ENCODE measurements at regions of chr2 and their contacts with region 1.

Region 1: DNA sequence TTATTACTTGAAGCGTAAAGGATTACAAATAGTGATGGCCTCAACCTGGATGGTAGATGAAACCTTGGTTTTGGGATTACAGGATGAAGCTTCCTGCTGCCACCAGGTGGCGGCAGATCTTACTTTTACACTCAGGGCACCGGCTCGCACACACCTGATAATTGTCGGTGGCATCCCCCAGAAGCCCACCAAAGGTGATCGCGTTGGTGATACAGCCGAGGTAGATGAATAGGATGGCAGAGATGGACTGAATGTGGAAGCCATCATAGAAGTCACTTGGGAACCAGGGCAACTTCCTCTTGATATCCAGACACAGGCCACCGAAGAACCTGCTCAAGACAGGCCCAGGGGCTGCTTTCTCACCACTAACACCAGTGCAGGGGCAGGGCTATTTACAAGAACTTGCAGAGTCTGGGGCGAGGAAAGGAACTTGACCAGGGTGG is 51.8 kb downstream of the MTHFD2 start:
- DNase-seq: peak in 4 of 5 donors; percentile 53 to 59 (median 57)
- H3K4me3 ChIP-seq: no peak overlapping the region
- H3K4me3 Mint-ChIP-seq: peak overlapping the region in 1 of 8 donors; percentile 55
- H3K27ac ChIP-seq: no peak overlapping the region
- H3K27ac Mint-ChIP-seq: peak overlapping the region in 3 of 7 donors; percentile 55 to 84 (median 84)
- H3K4me1 ChIP-seq: peaks cover 4% of the 10 kb centered on the region
- H3K4me1 Mint-ChIP-seq: peaks cover 4 to 8% (median 6%) of the 10 kb centered on the region in 4 donors
- H3K27me3 ChIP-seq: no peaks in the 10 kb centered on the region
- H3K27me3 Mint-ChIP-seq: no peaks in the 10 kb centered on the region

Region 2: GRCh38 chr2:74080346-74080745 is 169.9 kb before region 1 on chr2:
- CTCF ChIA-PET with region 1: no interaction called
- POLR2A ChIA-PET with region 1: no interaction called
- intact Hi-C with region 1: no loop called
- DNase-seq: no peak
- H3K4me3 ChIP-seq: no peak overlapping the region
- H3K4me3 Mint-ChIP-seq: no peak overlapping the region
- H3K27ac ChIP-seq: no peak overlapping the region
- H3K27ac Mint-ChIP-seq: peak overlapping the region in 2 of 7 donors; percentile 14 to 36
- H3K4me1 ChIP-seq: no peaks in the 10 kb centered on the region
- H3K4me1 Mint-ChIP-seq: peaks cover 0 to 2% (median 0%) of the 10 kb centered on the region in 4 donors
- H3K27me3 ChIP-seq: no peaks in the 10 kb centered on the region
- H3K27me3 Mint-ChIP-seq: no peaks in the 10 kb centered on the region

Region 3: GRCh38 chr2:74206180-74206688 is 44.0 kb before region 1 on chr2:
- CTCF ChIA-PET with region 1: interaction called, 12 read pairs
- POLR2A ChIA-PET with region 1: no interaction called
- intact Hi-C with region 1: no loop called
- DNase-seq: peak; percentile 53 to 64 (median 55)
- H3K4me3 ChIP-seq: peak overlapping the region in 1 of 2 donors; percentile 23
- H3K4me3 Mint-ChIP-seq: peak overlapping the region; percentile 74 to 85 (median 80)
- H3K27ac ChIP-seq: peak overlapping the region; percentile 68
- H3K27ac Mint-ChIP-seq: peak overlapping the region; percentile 91 to 99 (median 96)
- H3K4me1 ChIP-seq: peaks cover 52% of the 10 kb centered on the region
- H3K4me1 Mint-ChIP-seq: peaks cover 27 to 56% (median 39%) of the 10 kb centered on the region in 4 donors
- H3K27me3 ChIP-seq: no peaks in the 10 kb centered on the region
- H3K27me3 Mint-ChIP-seq: no peaks in the 10 kb centered on the region

Region 4: DNA sequence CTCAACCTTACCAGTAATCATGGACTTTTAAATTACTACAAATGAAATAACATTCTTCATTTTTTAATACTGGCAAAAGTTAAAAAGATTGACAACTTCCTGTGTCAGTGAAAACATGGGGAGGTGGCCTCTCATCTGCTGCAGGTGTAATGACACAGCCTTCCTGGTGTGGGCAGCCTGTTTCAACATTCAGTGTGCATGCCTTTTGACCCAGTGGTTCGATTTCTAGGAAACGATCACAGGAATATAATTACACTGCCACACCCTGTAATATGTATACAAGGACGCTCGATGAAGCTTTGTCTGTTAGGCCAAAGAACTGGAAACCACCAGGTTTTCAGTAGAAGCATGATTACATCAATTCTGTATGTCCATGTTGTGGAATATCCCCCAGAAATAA is 16.9 kb after region 1 on chr2:
- CTCF ChIA-PET with region 1: interaction called, 16 read pairs
- POLR2A ChIA-PET with region 1: no interaction called
- intact Hi-C with region 1: no loop called
- DNase-seq: peak; percentile 66 to 73 (median 70)
- H3K4me3 ChIP-seq: no peak overlapping the region
- H3K4me3 Mint-ChIP-seq: peak overlapping the region; percentile 11 to 77 (median 65)
- H3K27ac ChIP-seq: no peak overlapping the region
- H3K27ac Mint-ChIP-seq: peak overlapping the region in 6 of 7 donors; percentile 14 to 81 (median 70)
- H3K4me1 ChIP-seq: peaks cover 20% of the 10 kb centered on the region
- H3K4me1 Mint-ChIP-seq: peaks cover 14 to 23% (median 18%) of the 10 kb centered on the region in 4 donors
- H3K27me3 ChIP-seq: no peaks in the 10 kb centered on the region
- H3K27me3 Mint-ChIP-seq: no peaks in the 10 kb centered on the region

Region 5: DNA sequence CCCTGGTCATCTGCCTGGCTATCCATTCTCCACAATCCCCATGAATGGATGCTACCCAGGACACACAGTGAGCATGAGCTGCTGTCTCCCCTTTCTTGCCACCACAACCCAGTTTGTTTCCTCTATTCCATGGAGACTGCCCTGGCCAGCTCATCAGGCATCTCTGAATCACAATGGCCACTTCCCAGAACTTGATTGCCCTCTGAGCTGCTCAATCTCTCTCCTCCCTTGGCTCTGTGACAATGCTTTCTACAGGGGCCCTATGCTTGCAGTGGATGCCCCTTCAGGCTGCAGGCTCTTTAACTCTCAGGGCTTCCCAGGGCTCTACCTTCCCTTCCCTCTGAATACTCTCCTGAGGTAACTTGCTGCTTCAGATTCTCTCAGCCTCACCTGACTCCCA is 107.4 kb after region 1 on chr2:
- CTCF ChIA-PET with region 1: interaction called, 10 read pairs
- POLR2A ChIA-PET with region 1: no interaction called
- intact Hi-C with region 1: no loop called
- DNase-seq: no peak
- H3K4me3 ChIP-seq: no peak overlapping the region
- H3K4me3 Mint-ChIP-seq: no peak overlapping the region
- H3K27ac ChIP-seq: no peak overlapping the region
- H3K27ac Mint-ChIP-seq: peak overlapping the region in 2 of 7 donors; percentile 8 to 12
- H3K4me1 ChIP-seq: no peaks in the 10 kb centered on the region
- H3K4me1 Mint-ChIP-seq: no peaks in the 10 kb centered on the region
- H3K27me3 ChIP-seq: no peaks in the 10 kb centered on the region
- H3K27me3 Mint-ChIP-seq: no peaks in the 10 kb centered on the region

Region 6: GRCh38 chr2:74587664-74588277 is 337.6 kb after region 1 on chr2:
- CTCF ChIA-PET with region 1: interaction called, 18 read pairs
- POLR2A ChIA-PET with region 1: no interaction called
- intact Hi-C with region 1: loop called (anchors 1 kb)
- DNase-seq: peak; percentile 58 to 68 (median 67)
- H3K4me3 ChIP-seq: no peak overlapping the region
- H3K4me3 Mint-ChIP-seq: no peak overlapping the region
- H3K27ac ChIP-seq: no peak overlapping the region
- H3K27ac Mint-ChIP-seq: no peak overlapping the region
- H3K4me1 ChIP-seq: peaks cover 8% of the 10 kb centered on the region
- H3K4me1 Mint-ChIP-seq: peaks cover 7 to 10% (median 9%) of the 10 kb centered on the region in 4 donors
- H3K27me3 ChIP-seq: peaks cover 13% of the 10 kb centered on the region
- H3K27me3 Mint-ChIP-seq: peaks cover 1 to 8% of the 10 kb centered on the region in 2 donors

Measured in CD4-positive, alpha-beta memory T cell (primary cell).